PC-3 (cell line): ENCODE measurements at regions of chr3 and their contacts with region 1.

Region 1: GRCh38 chr3:143972505-143973255 is 1.1 kb downstream of the DIPK2A start:
- DNase-seq: peak; percentile 48
- ATAC-seq: peak; percentile 37
- H3K4me3 ChIP-seq: peak overlapping the region; percentile 99
- H3K27ac ChIP-seq: peak overlapping the region; percentile 88
- H3K4me1 ChIP-seq: peaks cover 32% of the 10 kb centered on the region
- H3K27me3 ChIP-seq: no peaks in the 10 kb centered on the region
- CTCF ChIP-seq: peak; percentile 54

Region 2: DNA sequence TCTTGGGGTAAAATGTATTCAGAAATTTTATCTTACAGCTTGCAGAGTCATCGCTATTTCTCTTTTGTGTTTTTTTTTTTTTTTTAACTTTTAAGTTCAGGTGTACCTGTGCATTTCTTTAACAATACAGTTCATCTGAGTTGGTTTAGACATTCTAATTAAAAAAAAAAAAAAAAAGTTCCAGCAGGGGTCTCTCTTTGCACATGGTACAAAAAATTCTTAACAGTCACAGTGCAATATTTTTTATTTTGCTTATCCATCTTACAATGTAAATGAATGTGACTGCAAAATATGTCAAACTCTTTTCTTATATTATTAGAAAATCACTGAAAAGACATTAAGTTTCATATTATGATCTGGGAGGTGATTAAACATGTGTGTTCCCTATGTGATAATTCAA is 76.9 kb before region 1 on chr3:
- CTCF ChIA-PET with region 1: no interaction called
- POLR2A ChIA-PET with region 1: interaction called, 7 read pairs
- intact Hi-C with region 1: loop called (anchors 5 kb)
- DNase-seq: peak; percentile 40
- ATAC-seq: no peak
- H3K4me3 ChIP-seq: no peak overlapping the region
- H3K27ac ChIP-seq: no peak overlapping the region
- H3K4me1 ChIP-seq: peaks cover 3% of the 10 kb centered on the region
- H3K27me3 ChIP-seq: no peaks in the 10 kb centered on the region
- CTCF ChIP-seq: peak; percentile 52; the same call in 1 of the 2 replicates

Region 3: GRCh38 chr3:144011251-144011799 is 38.6 kb after region 1 on chr3:
- CTCF ChIA-PET with region 1: no interaction called
- POLR2A ChIA-PET with region 1: interaction called, 8 read pairs
- intact Hi-C with region 1: loop called (anchors 2 kb)
- DNase-seq: peak; percentile 75
- ATAC-seq: peak; percentile 93
- H3K4me3 ChIP-seq: no peak overlapping the region; the same call in 1 of the 2 replicates
- H3K27ac ChIP-seq: peak overlapping the region; percentile 87
- H3K4me1 ChIP-seq: peaks cover 27% of the 10 kb centered on the region
- H3K27me3 ChIP-seq: no peaks in the 10 kb centered on the region
- CTCF ChIP-seq: no peak

Region 4: GRCh38 chr3:144128108-144128892 is 155.6 kb after region 1 on chr3:
- CTCF ChIA-PET with region 1: no interaction called
- POLR2A ChIA-PET with region 1: no interaction called
- intact Hi-C with region 1: no loop called
- DNase-seq: no peak
- ATAC-seq: no peak
- H3K4me3 ChIP-seq: no peak overlapping the region
- H3K27ac ChIP-seq: no peak overlapping the region
- H3K4me1 ChIP-seq: no peaks in the 10 kb centered on the region
- H3K27me3 ChIP-seq: no peaks in the 10 kb centered on the region
- CTCF ChIP-seq: no peak

Region 5: DNA sequence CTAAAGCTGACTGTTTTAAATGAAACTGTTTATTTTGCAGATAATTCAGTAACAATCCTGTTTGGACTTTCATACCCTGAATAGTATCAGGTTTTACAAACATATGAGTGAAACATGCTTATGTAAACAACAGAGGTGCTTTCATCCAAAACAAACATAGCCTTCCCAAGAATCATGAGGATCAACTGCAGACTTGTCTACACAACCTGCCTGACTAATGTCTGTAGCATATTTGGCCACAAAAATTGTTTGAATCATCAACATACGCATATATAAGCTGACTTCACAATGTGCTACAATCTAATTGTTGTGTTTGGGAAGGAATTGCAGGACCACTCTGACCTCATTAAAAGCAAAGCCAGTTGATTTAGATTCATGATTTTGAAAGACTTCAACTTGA is 189.4 kb after region 1 on chr3:
- CTCF ChIA-PET with region 1: no interaction called
- POLR2A ChIA-PET with region 1: no interaction called
- intact Hi-C with region 1: loop called (anchors 1 kb)
- DNase-seq: peak; percentile 93
- ATAC-seq: peak; percentile 96
- H3K4me3 ChIP-seq: no peak overlapping the region
- H3K27ac ChIP-seq: peak overlapping the region; percentile 82
- H3K4me1 ChIP-seq: peaks cover 17% of the 10 kb centered on the region
- H3K27me3 ChIP-seq: no peaks in the 10 kb centered on the region
- CTCF ChIP-seq: no peak

Region 6: DNA sequence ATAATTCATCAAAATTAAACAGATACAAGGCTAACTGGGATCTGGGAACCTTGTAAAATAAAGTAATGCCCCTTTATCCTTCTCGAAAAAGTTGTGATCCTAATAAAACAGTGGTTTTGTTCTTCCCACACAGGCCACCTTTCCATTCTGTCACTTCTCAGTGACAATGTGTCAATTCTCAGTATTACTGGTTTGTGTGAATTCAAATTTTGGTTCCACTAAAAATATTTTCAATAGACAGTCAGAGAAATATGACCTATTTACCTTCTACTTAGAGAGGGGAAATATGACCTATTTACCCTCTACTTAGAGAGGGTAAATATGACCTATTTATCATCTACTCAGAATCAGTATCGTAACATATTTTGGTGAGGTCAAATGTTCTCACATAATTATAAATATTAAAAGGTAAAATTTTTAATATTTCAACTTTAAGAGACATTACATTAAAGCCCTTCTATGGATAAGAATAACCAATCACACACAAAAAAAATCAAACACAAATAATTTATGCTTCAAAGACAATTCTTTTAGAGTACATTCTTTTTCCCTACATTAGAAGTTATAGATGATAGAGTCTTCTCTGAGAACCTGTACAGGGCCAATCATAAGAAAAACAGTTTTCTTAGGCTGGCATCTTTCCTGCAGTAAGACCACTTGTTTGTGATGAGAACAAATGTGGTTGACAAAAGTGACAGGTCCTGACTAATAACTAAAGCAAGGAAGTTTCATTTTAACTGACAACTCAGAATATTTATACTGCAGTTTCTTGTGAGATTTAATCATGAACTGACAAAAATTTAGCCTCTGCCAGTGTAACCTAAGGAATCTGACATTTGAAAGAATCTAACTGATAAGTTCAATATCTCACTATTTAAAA is 322.2 kb after region 1 on chr3:
- CTCF ChIA-PET with region 1: no interaction called
- POLR2A ChIA-PET with region 1: no interaction called
- intact Hi-C with region 1: loop called (anchors 10 kb)
- DNase-seq: no peak
- ATAC-seq: no peak
- H3K4me3 ChIP-seq: no peak overlapping the region
- H3K27ac ChIP-seq: no peak overlapping the region
- H3K4me1 ChIP-seq: no peaks in the 10 kb centered on the region
- H3K27me3 ChIP-seq: no peaks in the 10 kb centered on the region
- CTCF ChIP-seq: no peak

Region 7: DNA sequence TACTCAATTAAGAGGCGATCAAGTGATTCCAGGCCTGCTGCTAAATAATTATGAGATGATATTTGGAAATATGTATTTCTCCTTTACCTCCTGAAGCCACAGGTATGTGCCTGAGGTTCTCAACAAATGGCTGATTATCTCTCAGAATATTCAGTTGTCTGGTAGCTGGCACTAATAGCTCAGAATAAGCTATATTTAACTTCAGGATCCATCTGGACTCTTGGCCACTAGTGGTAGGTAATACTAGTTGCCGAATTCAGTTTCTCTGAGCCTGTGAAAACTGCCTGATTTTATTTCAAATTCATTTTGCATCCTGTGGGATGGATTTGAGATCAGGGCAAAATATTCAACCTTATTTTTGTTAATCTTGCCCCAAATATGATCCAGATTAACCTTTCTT is 498.0 kb after region 1 on chr3:
- CTCF ChIA-PET with region 1: no interaction called
- POLR2A ChIA-PET with region 1: no interaction called
- intact Hi-C with region 1: loop called (anchors 5 kb)
- DNase-seq: no peak
- ATAC-seq: no peak
- H3K4me3 ChIP-seq: no peak overlapping the region
- H3K27ac ChIP-seq: no peak overlapping the region
- H3K4me1 ChIP-seq: no peaks in the 10 kb centered on the region
- H3K27me3 ChIP-seq: no peaks in the 10 kb centered on the region
- CTCF ChIP-seq: no peak

Region 8: GRCh38 chr3:144770915-144771351 is 798.3 kb after region 1 on chr3:
- CTCF ChIA-PET with region 1: interaction called, 4 read pairs
- POLR2A ChIA-PET with region 1: no interaction called
- intact Hi-C with region 1: loop called (anchors 1 kb)
- DNase-seq: peak; percentile 45
- ATAC-seq: peak; percentile 71
- H3K4me3 ChIP-seq: no peak overlapping the region
- H3K27ac ChIP-seq: no peak overlapping the region
- H3K4me1 ChIP-seq: no peaks in the 10 kb centered on the region
- H3K27me3 ChIP-seq: no peaks in the 10 kb centered on the region
- CTCF ChIP-seq: peak; percentile 54

Region 9: DNA sequence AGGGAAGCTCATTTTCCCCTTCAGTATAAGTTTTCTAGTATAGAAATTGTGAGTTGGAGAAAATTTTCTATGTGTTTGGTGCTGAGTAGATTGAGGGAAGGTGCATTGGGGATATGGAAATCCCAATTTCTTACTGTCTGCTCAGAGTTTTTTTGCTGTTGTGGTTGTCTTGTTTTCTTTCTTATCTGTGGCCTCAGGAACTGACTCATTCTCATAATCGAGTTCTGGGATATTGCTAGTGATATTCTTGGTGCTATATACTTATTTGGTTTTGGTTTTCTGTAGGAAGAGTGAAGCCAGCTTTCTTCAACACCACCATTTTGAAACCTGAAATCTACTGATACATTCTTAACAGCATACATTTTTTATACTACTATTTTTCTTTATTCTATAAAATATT is 868.2 kb after region 1 on chr3:
- CTCF ChIA-PET with region 1: no interaction called
- POLR2A ChIA-PET with region 1: no interaction called
- intact Hi-C with region 1: no loop called
- DNase-seq: no peak
- ATAC-seq: no peak
- H3K4me3 ChIP-seq: no peak overlapping the region
- H3K27ac ChIP-seq: no peak overlapping the region
- H3K4me1 ChIP-seq: no peaks in the 10 kb centered on the region
- H3K27me3 ChIP-seq: no peaks in the 10 kb centered on the region
- CTCF ChIP-seq: no peak